Sigmoid colon (tissue), 7 donors: ENCODE measurements at regions of chr12 and their contacts with region 1.

Region 1: DNA sequence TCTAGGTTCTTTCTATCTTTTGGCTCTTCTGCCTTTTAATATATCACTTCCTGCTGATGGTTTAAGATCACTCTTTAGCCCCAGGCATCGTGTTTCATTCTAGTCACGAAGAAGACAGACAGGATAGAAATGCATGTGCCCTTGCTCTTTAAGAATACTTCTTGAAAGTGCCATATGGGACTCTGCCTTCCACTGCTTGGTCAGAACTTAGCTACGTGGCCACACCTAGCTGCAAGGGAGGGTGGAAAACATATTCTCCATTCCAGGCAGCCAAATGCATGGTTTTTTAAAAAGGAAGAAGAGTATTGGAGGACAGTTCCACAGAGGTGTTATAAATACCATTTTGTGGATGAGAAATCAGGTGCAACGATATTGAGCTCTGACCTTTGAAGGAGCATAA is 143.3 kb downstream of the KLRB1 start:
- DNase-seq: no peak
- H3K4me3 ChIP-seq: no peak overlapping the region
- H3K27ac ChIP-seq: no peak overlapping the region
- H3K4me1 ChIP-seq: peaks cover 0 to 3% (median 0%) of the 10 kb centered on the region in 4 donors
- H3K27me3 ChIP-seq: no peaks in the 10 kb centered on the region
- CTCF ChIP-seq: no peak
- EP300 ChIP-seq: no peak
- POLR2A ChIP-seq: no peak

Region 2: GRCh38 chr12:9149372-9149771 is 315.0 kb before region 1 on chr12:
- intact Hi-C with region 1: no loop called
- DNase-seq: no peak
- H3K4me3 ChIP-seq: no peak overlapping the region
- H3K27ac ChIP-seq: no peak overlapping the region
- H3K4me1 ChIP-seq: no peaks in the 10 kb centered on the region
- H3K27me3 ChIP-seq: no peaks in the 10 kb centered on the region
- CTCF ChIP-seq: no peak
- EP300 ChIP-seq: no peak
- POLR2A ChIP-seq: no peak

Region 3: DNA sequence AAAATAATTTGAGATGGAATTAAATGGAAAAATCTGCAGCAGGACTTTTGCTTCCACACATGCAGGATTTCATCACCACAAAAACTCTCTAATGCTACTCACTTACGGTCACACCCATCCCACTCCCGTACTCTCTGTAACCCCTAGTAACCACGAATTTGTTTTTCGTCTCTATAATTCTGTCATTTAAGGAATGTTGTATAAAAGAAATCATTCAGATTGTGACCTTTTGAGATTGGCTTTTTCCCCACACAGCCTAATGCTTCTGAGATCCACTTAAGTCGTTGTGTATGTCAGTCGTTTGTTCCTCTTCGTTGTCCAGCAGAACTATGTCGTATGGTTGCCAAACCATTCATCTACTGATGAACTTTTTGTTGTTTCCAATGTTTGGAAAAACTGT is 236.5 kb before region 1 on chr12:
- intact Hi-C with region 1: no loop called
- DNase-seq: no peak
- H3K4me3 ChIP-seq: no peak overlapping the region
- H3K27ac ChIP-seq: no peak overlapping the region
- H3K4me1 ChIP-seq: no peaks in the 10 kb centered on the region
- H3K27me3 ChIP-seq: no peaks in the 10 kb centered on the region
- CTCF ChIP-seq: no peak
- EP300 ChIP-seq: no peak
- POLR2A ChIP-seq: no peak

Region 4: DNA sequence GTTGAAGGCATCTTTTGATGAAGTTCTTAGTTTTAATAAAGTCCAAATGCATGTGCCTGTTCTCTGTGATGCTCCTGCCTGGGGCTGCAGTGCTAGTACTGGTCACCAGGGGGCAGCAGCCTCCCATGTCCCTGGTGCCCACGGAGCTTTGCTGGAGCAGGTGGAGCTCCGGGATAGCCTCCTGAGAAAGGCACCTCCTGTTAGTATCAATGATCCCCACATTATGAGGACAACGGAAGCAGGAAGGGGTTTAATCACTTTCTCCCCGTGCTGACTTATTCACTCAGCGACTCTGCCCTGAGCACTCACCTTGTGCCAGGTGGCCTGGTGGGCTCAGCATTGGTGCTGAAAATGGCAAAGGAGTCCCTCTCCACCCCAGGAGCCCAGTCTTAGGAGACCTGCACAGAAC is 133.2 kb before region 1 on chr12:
- intact Hi-C with region 1: loop called (anchors 2 kb)
- DNase-seq: no peak
- H3K4me3 ChIP-seq: no peak overlapping the region
- H3K27ac ChIP-seq: no peak overlapping the region
- H3K4me1 ChIP-seq: peaks cover 0 to 7% (median 0%) of the 10 kb centered on the region in 4 donors
- H3K27me3 ChIP-seq: no peaks in the 10 kb centered on the region
- CTCF ChIP-seq: peak; percentile 72 to 95 (median 83)
- EP300 ChIP-seq: no peak
- POLR2A ChIP-seq: no peak

Region 5: DNA sequence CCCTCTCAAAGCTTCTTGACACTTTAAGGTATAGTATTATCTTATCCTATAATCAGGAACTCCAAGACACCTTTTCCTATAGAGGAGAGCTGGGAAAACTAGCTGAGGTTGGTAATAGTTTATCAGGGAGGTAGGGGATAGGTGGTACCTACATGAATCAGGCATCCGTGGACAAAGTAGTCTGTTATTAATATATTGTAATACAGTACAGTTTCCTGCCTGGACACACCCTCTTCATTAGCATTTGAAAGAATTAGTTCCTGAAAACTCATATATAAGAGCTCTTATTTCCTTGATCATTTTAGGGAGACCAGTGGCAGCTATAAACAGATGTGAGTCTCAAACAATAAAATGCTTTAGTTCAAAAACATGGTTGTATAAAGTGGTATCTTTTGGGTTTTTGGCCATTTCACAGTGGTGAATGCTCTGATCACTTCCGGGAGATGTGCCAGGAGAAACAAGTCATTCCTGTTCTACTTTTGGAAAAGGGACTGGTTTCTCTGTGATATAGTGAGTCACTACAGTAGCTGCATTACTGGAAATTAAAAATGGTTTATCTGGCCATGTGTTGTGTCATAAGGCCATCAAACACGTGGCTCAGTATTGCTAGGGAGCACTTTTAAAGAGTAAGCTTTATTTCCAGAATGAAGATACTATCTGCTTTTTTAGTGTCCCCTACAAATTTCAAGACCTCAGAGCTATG is 45.2 kb after region 1 on chr12:
- intact Hi-C with region 1: no loop called
- DNase-seq: no peak
- H3K4me3 ChIP-seq: no peak overlapping the region
- H3K27ac ChIP-seq: no peak overlapping the region
- H3K4me1 ChIP-seq: no peaks in the 10 kb centered on the region
- H3K27me3 ChIP-seq: no peaks in the 10 kb centered on the region
- CTCF ChIP-seq: no peak
- EP300 ChIP-seq: no peak
- POLR2A ChIP-seq: no peak

Region 6: DNA sequence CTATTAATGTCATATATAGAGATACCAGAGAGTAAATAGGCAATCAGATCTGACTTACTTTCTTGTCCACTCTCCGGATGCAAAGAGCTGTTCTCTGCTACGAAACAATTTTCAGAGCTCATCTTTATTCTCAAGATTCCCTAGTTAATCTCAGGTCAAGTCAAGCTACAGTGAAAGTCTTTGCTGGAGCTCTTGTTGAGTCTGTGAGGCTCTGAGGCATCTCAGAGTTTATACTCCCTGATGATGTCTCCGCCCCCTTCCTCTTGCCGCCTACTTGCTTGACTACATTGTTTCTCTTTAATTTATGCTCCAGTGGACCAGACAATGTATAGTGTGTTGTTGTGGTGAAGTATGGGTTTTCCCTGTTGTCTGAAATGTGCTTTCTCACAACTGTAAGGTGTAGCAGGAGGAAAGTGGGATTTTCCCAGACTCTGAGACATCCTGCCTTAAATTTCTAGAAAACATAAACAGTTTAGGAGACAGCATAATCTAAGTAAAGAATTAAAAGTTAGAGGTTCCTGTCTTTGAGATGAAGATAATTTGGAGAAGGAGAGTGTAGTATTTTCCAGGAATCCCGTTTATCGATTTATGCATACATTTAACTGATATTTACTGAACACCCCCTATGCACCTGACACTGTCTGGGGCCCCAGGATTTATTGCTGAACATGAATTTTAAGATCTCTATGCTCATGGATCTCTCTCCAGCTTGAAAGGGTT is 296.5 kb after region 1 on chr12 and contains the start of gene CD69:
- intact Hi-C with region 1: no loop called
- DNase-seq: no peak
- H3K4me3 ChIP-seq: peak within 1 kb of the TSS in 1 of 4 donors; percentile 5
- H3K27ac ChIP-seq: peak within 1 kb of the TSS in 1 of 4 donors; percentile 16
- H3K4me1 ChIP-seq: no peaks in the 10 kb centered on the region
- H3K27me3 ChIP-seq: no peaks in the 10 kb centered on the region
- CTCF ChIP-seq: no peak
- EP300 ChIP-seq: no peak
- POLR2A ChIP-seq: peak in 1 of 2 donors; percentile 13
- total RNA-seq, gene CD69: 2.7 to 7.8 (median 3.6) TPM